ENCODE measurements at regions of chr5 and their contacts with region 1.

Region 1: GRCh38 chr5:151252762-151253604 is at the start of gene GM2A:
- DNase-seq: peak; percentile 99
- ATAC-seq: peak; percentile 94
- H3K4me3 ChIP-seq: peak within 1 kb of the TSS; percentile 95
- H3K27ac ChIP-seq: peak within 1 kb of the TSS; percentile 25
- H3K4me1 ChIP-seq: peaks cover 32% of the 10 kb centered on the region
- H3K27me3 ChIP-seq: no peaks in the 10 kb centered on the region
- CTCF ChIP-seq: no peak
- total RNA-seq, gene GM2A: 78.3 and 90.2 TPM in 2 replicates

Region 2: DNA sequence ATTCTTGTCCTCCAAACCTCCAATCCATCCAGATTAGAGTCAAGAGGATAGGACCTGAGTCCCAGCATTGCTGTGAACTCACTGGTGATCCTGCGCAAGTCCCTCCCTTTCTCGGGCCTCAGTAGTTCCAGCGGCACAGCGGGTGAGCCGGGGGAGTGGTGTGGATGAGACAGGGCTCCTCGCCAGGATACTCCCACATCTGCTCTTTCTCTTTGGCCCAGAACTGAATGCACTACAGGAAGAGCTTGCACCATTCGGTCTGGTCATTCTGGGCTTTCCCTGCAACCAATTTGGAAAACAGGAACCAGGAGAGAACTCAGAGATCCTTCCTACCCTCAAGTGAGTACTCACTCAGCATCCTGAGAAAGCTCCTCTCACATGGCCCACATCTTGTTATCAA is 226.3 kb before region 1 on chr5:
- CTCF ChIA-PET with region 1: no interaction called
- POLR2A ChIA-PET with region 1: no interaction called
- intact Hi-C with region 1: no loop called
- DNase-seq: no peak
- ATAC-seq: no peak
- H3K4me3 ChIP-seq: no peak overlapping the region
- H3K27ac ChIP-seq: no peak overlapping the region
- H3K4me1 ChIP-seq: peaks cover 31% of the 10 kb centered on the region
- H3K27me3 ChIP-seq: no peaks in the 10 kb centered on the region
- CTCF ChIP-seq: no peak

Region 3: GRCh38 chr5:151047814-151048425 is 205.1 kb before region 1 on chr5:
- CTCF ChIA-PET with region 1: no interaction called
- POLR2A ChIA-PET with region 1: no interaction called
- intact Hi-C with region 1: no loop called
- DNase-seq: peak; percentile 22
- ATAC-seq: peak; percentile 67
- H3K4me3 ChIP-seq: no peak overlapping the region
- H3K27ac ChIP-seq: no peak overlapping the region
- H3K4me1 ChIP-seq: no peaks in the 10 kb centered on the region
- H3K27me3 ChIP-seq: no peaks in the 10 kb centered on the region
- CTCF ChIP-seq: peak; percentile 76

Region 4: GRCh38 chr5:151134238-151134637 is 118.7 kb before region 1 on chr5:
- CTCF ChIA-PET with region 1: no interaction called
- POLR2A ChIA-PET with region 1: no interaction called
- intact Hi-C with region 1: no loop called
- DNase-seq: no peak
- ATAC-seq: no peak
- H3K4me3 ChIP-seq: no peak overlapping the region
- H3K27ac ChIP-seq: no peak overlapping the region
- H3K4me1 ChIP-seq: no peaks in the 10 kb centered on the region
- H3K27me3 ChIP-seq: no peaks in the 10 kb centered on the region
- CTCF ChIP-seq: no peak

Region 5: DNA sequence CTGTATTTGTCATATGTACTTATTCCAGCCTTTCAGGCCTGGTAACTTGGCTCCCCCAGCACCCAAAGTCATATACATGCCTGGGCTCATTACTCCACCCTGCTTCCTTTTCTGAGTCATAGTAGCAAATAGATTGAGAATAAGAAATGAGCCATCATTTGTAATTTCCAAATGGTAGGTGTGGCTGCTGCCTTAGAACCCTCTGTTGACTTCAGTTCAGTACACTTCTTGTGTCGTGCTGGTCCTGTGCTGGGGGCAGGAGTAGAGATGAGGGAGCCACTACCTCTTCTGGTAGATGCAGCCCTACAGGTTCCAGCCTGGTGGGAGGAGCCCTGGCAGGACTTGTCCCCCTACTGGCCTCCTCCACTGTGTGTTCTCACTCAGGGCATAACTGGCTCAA is 11.1 kb after region 1 on chr5:
- CTCF ChIA-PET with region 1: no interaction called
- POLR2A ChIA-PET with region 1: interaction called, 7 read pairs
- intact Hi-C with region 1: loop called (anchors 1 kb)
- DNase-seq: peak; percentile 94
- ATAC-seq: peak; percentile 86
- H3K4me3 ChIP-seq: peak overlapping the region; percentile 27
- H3K27ac ChIP-seq: peak overlapping the region; percentile 91
- H3K4me1 ChIP-seq: peaks cover 42% of the 10 kb centered on the region
- H3K27me3 ChIP-seq: no peaks in the 10 kb centered on the region
- CTCF ChIP-seq: peak; percentile 14; the same call in 1 of the 2 replicates